ENCODE measurements at regions of chr1 and their contacts with region 1.

Region 1: GRCh38 chr1:3491291-3492246 is 37.1 kb downstream of the ARHGEF16 start:
- DNase-seq: peak; percentile 79 to 97 (median 94)
- ATAC-seq: peak; percentile 94
- H3K4me3 ChIP-seq: no peak overlapping the region
- H3K27ac ChIP-seq: no peak overlapping the region
- H3K4me1 ChIP-seq: peaks cover 0 to 37% of the 10 kb centered on the region in 2 experiments; a peak in 2 of 5 replicates
- H3K27me3 ChIP-seq: peaks cover 4 to 33% of the 10 kb centered on the region in 2 experiments; a peak in 3 of 5 replicates
- CTCF ChIP-seq: peak; percentile 89 to 96 (median 94)
- EP300 ChIP-seq: no peak
- POLR2A ChIP-seq: no peak
- RAD21 ChIP-seq: peak in 1 of 2 experiments; percentile 79; a peak in 2 of 4 replicates

Region 2: DNA sequence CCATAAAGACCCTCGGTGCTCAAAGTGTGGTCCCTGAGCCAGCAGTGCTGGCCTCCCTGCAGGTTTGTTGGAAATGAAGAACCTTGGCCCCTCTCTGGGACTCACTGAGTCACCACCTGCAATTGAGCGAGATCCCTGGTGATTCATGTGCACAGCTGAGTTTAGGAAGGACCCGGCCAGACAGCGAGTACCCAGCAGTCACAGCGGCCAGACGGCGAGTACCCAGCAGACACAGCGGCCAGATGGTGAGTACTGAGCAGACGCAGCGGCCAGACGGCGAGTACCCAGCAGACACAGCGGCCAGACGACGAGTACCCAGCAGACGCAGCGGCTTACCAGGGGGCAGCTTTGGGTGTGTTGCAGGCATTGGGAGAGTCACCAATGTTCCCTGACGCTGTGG is 298.7 kb before region 1 on chr1:
- CTCF ChIA-PET with region 1: no interaction called
- POLR2A ChIA-PET with region 1: no interaction called
- in situ Hi-C with region 1: no loop called
- intact Hi-C with region 1: no loop called
- DNase-seq: peak in 1 of 4 experiments; percentile 5
- ATAC-seq: peak; percentile 60
- H3K4me3 ChIP-seq: no peak overlapping the region
- H3K27ac ChIP-seq: no peak overlapping the region
- H3K4me1 ChIP-seq: no peaks in the 10 kb centered on the region; a peak in 1 of 5 replicates
- H3K27me3 ChIP-seq: peaks cover 22 to 90% of the 10 kb centered on the region in 2 experiments
- CTCF ChIP-seq: no peak
- EP300 ChIP-seq: no peak
- POLR2A ChIP-seq: no peak
- RAD21 ChIP-seq: no peak

Region 3: DNA sequence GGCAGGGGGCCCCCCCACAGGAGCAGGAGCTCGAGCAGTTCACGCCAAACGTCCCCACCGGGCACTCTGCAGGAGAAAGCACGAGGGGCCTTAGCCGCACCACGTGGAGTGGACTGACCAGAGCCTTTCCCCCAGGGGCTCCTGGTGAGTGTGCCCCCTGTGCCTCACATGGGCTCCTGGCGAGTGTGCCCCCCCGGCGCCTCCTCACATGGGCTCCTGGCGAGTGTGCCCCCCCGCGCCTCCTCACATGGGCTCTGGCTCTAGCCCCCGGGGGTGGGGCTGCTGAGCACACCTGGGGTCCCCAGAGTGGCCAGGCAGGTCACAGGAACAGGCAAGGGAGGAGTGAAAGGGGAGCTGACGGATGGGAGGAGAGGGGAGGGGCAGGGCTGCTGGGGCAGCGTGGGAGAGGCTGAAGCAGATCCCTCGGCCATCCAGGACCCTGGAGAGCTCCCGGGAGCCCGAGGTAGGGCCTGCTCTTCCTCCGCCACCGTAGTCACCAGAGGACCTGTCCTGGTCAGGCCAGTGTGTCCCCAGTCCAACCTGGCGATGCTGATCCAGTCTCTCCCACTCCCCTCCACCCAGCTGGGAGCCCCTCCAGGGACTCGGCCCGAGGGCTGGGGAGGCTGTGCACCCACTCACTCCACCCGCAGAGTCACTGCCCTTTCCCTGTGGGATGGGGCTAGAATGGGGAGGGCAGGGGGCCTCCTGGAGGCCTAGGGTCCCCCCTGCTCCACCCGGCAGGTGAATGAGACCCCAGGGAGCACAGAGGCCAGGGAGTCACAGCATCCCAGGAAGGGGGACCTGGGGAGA is 10.5 kb after region 1 on chr1:
- CTCF ChIA-PET with region 1: no interaction called
- POLR2A ChIA-PET with region 1: no interaction called
- in situ Hi-C with region 1: no loop called
- intact Hi-C with region 1: no loop called
- DNase-seq: peak; percentile 45 to 72 (median 63)
- ATAC-seq: peak; percentile 52
- H3K4me3 ChIP-seq: no peak overlapping the region
- H3K27ac ChIP-seq: no peak overlapping the region
- H3K4me1 ChIP-seq: peaks cover 0 to 57% of the 10 kb centered on the region in 2 experiments; a peak in 1 of 5 replicates
- H3K27me3 ChIP-seq: peaks cover 7 to 58% of the 10 kb centered on the region in 2 experiments; a peak in 3 of 5 replicates
- CTCF ChIP-seq: no peak
- EP300 ChIP-seq: no peak
- POLR2A ChIP-seq: no peak
- RAD21 ChIP-seq: no peak

Region 4: DNA sequence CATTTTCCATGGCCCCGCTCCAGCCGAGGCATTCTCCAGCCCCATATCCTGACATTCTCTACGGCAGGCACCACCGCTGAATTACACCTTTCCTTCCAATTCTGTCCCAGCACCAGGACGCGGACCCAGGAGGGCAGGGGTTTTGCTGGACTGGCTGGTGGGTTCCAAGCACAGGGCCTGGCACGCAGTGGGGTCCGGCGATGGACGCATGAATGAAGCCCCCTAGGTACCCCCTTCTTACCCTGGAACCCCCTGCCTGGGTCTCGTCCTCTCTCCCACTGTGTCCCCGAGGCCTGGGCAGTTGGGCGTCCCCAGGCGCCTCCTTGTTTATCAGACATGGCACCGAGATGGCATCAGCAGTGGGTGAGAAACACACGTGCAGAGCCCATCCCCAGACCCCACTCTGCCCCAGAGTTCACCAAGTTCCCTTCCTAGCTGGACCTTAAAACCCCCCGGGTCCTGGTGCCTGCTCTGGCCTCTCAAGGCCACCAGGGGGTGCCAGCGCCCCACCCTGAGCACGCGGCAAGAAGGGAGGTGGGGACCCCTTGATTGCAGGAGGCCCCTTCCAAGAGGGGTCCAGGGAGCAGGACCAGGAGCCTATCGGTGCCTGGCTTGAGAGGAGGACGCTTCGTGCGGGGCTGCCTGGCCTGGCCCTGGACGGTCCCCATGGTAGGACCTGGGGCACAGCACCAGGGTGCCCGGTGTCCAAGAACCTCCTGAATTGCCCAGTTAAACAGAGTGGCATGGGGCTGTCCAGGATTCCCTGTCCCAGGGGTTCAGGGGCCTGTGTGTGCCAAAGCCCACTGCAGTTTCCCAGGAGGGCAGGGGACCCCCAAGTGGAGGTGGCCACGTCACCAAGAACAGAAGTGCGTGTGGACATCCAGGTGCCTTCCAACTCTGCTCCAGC is 73.6 kb after region 1 on chr1:
- CTCF ChIA-PET with region 1: no interaction called
- POLR2A ChIA-PET with region 1: no interaction called
- in situ Hi-C with region 1: no loop called
- intact Hi-C with region 1: loop called (anchors 5 kb)
- DNase-seq: peak; percentile 57 to 89 (median 86)
- ATAC-seq: peak; percentile 80
- H3K4me3 ChIP-seq: no peak overlapping the region
- H3K27ac ChIP-seq: no peak overlapping the region
- H3K4me1 ChIP-seq: peaks cover 0 to 21% of the 10 kb centered on the region in 2 experiments; a peak in 1 of 5 replicates
- H3K27me3 ChIP-seq: peaks cover 20 to 63% of the 10 kb centered on the region in 2 experiments
- CTCF ChIP-seq: peak; percentile 89 to 94 (median 91)
- EP300 ChIP-seq: no peak
- POLR2A ChIP-seq: no peak
- RAD21 ChIP-seq: peak; percentile 84 to 94